Activated CD4-positive, alpha-beta T cell treated with anti-CD3 and anti-CD28 coated beads, Interleukin-2, amount 10 ng/mL, durations not matched to agents 24 days and 14 days (primary cell): ENCODE measurements at regions of chr6 and their contacts with region 1.

Region 1: DNA sequence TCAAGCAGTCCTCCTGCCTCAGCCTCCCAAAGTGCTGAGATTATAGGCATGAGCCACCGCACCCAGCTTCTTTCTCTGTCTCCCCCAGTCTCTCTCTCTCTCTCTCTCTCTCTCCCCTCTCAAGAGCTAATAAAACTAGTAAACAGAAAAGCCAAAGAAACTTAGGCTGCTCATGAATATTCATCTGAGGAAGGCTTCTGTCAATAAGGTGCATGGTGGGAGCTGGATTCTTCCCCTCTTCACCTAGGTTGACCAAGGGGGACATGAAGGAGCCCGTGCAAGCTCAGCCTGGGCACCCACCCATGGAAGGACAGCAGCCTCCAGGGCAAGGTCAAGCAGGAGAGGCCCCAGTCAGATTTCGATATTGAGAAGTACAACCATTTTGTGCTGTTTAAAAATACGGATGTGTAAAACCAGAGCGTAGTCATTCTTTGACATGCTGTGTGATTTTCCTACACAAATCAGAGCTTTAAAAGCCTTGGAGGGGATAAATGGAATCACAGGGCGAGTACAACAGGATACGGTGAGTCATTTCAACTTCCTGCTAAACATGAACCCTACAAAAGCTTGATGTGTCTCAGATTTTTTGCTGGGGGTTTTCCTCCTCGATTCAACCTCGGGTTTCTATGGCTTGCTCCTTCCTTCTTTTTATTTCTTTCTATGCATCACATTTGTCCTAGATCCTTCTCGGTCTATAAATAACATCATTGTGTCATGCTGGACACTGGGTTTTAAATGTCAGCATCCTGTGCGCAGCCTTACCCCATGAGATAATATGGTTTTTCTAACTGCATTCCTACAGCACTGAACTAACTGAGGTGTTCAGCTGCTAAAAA is 368.9 kb upstream of the JARID2 start:
- DNase-seq: peak; percentile 81
- H3K4me3 Mint-ChIP-seq: peak overlapping the region; percentile 79
- H3K27ac Mint-ChIP-seq: peak overlapping the region; percentile 97
- H3K4me1 Mint-ChIP-seq: peaks cover 68% of the 10 kb centered on the region
- H3K27me3 Mint-ChIP-seq: no peaks in the 10 kb centered on the region

Region 2: GRCh38 chr6:14452567-14453527 is 424.1 kb before region 1 on chr6:
- intact Hi-C with region 1: loop called (anchors 1 kb)
- DNase-seq: peak; percentile 90
- H3K4me3 Mint-ChIP-seq: peak overlapping the region; percentile 65
- H3K27ac Mint-ChIP-seq: peak overlapping the region; percentile 95
- H3K4me1 Mint-ChIP-seq: peaks cover 81% of the 10 kb centered on the region
- H3K27me3 Mint-ChIP-seq: no peaks in the 10 kb centered on the region

Region 3: DNA sequence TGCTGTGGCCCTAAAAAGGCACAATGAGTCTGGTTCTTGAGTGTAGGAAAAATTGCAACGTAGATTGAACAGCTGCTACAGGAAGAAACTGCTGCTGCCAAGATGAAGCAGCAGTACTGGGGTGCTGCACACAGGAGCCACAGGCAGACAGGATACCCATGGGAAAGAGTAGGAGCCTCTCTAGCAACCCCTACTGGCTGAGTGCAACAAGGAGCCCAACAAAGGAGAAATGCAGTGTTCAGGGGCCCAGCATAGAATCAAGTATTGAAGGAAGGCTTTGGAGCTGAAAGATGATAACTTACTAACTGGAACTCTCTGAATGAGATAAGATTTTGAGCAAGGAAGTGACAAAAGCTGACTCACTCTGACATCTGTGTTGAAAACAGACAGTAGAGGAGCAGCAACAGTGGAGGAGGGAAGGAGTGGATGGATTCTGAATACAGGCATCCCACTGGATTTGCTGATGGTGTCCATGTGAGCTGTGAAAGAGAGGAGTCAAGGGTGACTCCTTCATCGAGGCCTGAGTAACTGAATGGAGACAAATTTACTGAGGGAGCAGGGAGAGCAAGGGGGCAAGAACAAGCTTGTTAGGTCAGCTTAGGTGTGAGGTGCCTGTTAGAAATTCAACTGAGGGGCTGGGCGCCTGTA is 165.8 kb before region 1 on chr6:
- intact Hi-C with region 1: no loop called
- DNase-seq: peak; percentile 90
- H3K4me3 Mint-ChIP-seq: peak overlapping the region; percentile 24
- H3K27ac Mint-ChIP-seq: peak overlapping the region; percentile 95
- H3K4me1 Mint-ChIP-seq: peaks cover 42% of the 10 kb centered on the region
- H3K27me3 Mint-ChIP-seq: no peaks in the 10 kb centered on the region

Region 4: GRCh38 chr6:14743465-14744211 is 133.4 kb before region 1 on chr6:
- intact Hi-C with region 1: loop called (anchors 1 kb)
- DNase-seq: peak; percentile 90
- H3K4me3 Mint-ChIP-seq: peak overlapping the region; percentile 30
- H3K27ac Mint-ChIP-seq: peak overlapping the region; percentile 98
- H3K4me1 Mint-ChIP-seq: peaks cover 74% of the 10 kb centered on the region
- H3K27me3 Mint-ChIP-seq: no peaks in the 10 kb centered on the region

Region 5: DNA sequence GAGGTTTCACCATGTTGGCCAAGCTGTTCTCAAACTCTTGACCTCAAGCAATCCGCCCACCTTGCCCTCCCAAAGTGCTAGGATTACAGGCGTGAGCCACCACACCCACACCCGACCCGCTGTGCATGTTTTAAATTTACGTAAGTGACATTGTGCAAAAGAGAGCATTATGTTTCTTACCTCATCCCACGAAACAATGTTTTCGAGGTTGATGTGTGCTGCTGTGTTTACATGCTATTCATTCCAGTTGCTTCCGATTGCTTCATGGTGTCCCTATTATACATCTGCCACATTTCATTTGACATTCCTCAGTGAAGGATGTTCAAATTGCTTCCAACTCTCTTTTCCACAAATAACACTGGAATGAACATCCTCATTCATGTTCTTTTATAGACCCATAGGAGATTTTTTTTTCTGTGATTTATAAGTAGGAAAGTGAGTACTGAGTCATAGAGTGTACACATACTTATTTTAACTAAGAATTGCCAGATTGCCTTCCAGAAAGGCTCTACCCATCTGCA is 35.0 kb before region 1 on chr6:
- intact Hi-C with region 1: no loop called
- DNase-seq: no peak
- H3K4me3 Mint-ChIP-seq: no peak overlapping the region
- H3K27ac Mint-ChIP-seq: peak overlapping the region; percentile 12
- H3K4me1 Mint-ChIP-seq: peaks cover 11% of the 10 kb centered on the region
- H3K27me3 Mint-ChIP-seq: peaks cover 2% of the 10 kb centered on the region

Region 6: DNA sequence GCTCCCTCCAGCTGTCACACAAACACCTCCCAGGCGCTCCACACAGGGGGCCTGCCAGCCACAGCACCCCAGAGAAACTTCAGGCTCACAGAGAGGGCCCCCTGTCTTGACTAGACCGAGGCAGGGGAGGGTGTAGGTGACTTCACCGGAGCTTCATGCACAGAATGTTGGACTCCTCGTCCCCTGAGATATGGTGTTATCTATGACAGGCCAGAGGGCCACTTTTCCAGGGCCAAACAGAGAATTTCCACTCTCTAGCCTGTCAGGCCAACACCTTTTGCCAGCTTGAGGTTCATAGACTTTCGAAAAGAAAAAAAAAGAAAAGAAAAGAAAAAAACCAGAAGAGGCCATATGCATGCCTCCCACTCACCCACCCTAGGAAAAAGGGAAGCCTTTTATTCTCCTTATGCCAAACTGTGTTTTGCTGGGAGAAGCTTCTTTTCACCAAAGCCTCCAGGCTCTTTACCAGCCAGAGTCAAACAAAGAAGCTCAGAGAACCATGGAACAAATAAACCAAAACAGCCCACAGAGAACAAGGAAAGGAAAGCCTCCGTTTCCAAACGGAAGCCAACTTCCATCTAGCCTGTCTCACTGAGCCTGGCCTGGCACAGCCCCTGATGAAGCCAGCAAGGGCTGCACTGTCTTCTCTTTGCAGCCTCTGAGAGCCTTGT is 55.6 kb after region 1 on chr6:
- intact Hi-C with region 1: no loop called
- DNase-seq: no peak
- H3K4me3 Mint-ChIP-seq: no peak overlapping the region
- H3K27ac Mint-ChIP-seq: no peak overlapping the region
- H3K4me1 Mint-ChIP-seq: peaks cover 9% of the 10 kb centered on the region
- H3K27me3 Mint-ChIP-seq: no peaks in the 10 kb centered on the region

Region 7: DNA sequence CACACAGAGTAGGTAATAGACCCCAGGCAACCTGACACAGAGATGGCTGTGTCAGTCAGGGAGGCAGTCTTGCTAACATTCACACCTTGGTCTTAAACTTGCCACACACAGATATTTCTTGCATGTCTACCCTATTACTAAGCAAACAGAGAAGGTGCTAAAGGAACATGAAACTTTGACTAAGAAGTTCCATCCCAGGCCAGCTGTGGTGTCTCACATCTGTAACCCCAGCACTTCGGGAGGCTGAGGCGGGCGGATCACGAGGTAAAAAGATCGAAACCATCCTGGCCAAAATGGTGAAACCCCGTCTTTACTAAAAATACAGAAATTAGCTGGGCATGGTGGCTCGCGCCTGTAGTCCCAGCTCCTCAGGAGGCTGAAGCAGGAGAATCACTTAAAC is 146.5 kb after region 1 on chr6:
- intact Hi-C with region 1: loop called (anchors 1 kb)
- DNase-seq: peak; percentile 79
- H3K4me3 Mint-ChIP-seq: peak overlapping the region; percentile 40
- H3K27ac Mint-ChIP-seq: peak overlapping the region; percentile 92
- H3K4me1 Mint-ChIP-seq: peaks cover 32% of the 10 kb centered on the region
- H3K27me3 Mint-ChIP-seq: no peaks in the 10 kb centered on the region

Region 8: DNA sequence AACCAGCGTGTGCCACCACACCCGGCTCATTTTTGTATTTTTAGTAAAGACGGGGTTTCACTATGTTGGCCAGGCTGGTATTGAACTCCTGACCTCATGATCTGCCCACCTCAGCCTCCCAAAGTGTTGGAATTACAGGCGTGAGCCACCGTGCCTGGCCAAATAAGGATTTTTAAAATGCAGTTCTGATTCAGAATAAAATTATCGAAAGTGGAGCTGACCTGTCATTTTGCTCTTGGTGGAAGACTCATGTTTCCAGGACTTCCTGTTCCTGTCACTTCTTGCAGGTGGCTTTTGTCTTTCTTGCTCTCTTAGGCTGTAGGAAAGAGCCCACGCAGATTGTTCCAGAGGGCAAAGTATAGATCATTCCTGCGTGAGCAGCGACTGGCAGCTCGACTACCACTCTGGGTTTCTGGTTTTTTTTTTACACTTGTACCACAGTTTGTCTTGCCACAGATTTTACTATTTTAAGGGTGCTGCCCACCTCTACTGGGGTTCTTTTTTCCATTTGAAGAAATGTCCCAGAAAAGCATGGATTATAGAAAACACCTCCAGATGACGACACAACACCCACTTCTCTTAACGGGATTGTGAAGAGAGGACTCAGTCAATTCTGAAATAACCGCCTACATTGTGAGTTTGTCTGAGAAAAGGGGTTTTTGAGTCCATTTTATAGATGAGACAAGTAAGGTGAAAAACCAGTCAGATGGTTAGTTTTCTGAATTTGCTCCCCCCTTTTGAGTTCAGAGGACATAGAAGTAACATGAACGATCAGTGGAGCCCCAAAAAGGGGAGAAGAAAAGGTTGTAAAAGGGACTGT is 376.4 kb after region 1 on chr6:
- intact Hi-C with region 1: loop called (anchors 1 kb)
- DNase-seq: no peak
- H3K4me3 Mint-ChIP-seq: peak overlapping the region; percentile 87
- H3K27ac Mint-ChIP-seq: peak overlapping the region; percentile 82
- H3K4me1 Mint-ChIP-seq: peaks cover 91% of the 10 kb centered on the region
- H3K27me3 Mint-ChIP-seq: no peaks in the 10 kb centered on the region

Region 9: DNA sequence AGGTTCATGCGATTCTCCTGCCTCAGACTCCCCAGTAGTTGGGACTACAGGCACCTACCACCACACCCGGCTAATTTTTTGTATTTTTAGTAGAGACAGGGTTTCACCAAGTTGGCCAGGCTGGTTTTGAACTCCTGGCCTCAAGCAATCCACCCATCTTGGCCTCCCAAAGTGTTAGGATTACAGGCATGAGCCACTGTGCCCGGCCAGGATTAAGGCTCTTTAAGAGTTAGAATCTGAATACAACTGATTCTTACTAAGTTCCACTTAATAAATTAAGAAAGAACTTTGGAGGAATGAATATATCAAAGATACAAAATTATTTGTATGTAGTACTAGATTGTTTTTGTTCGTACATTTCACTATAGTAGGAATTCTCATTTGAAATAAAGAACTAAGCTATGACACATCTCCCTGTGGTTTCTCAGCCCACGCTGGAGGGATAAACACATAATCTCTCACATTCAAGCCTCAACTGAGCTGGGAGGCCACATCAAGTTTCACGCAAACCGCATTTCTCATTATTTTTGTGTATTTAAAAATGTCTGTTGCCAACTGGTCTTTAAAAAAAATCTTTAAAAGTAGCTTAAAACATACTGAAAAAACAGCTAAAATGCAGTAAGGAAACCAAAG is 751.6 kb after region 1 on chr6:
- intact Hi-C with region 1: loop called (anchors 5 kb)
- DNase-seq: peak; percentile 74
- H3K4me3 Mint-ChIP-seq: peak overlapping the region; percentile 42
- H3K27ac Mint-ChIP-seq: no peak overlapping the region
- H3K4me1 Mint-ChIP-seq: peaks cover 20% of the 10 kb centered on the region
- H3K27me3 Mint-ChIP-seq: no peaks in the 10 kb centered on the region